Dendritic cell treated with granulocyte-macrophage colony-stimulating factor and Interleukin-4, amounts not matched to agents 40 ng/mL and 50 ng/mL, for 4 days (primary cell): ENCODE measurements at regions of chr1 and their contacts with region 1.

Region 1: DNA sequence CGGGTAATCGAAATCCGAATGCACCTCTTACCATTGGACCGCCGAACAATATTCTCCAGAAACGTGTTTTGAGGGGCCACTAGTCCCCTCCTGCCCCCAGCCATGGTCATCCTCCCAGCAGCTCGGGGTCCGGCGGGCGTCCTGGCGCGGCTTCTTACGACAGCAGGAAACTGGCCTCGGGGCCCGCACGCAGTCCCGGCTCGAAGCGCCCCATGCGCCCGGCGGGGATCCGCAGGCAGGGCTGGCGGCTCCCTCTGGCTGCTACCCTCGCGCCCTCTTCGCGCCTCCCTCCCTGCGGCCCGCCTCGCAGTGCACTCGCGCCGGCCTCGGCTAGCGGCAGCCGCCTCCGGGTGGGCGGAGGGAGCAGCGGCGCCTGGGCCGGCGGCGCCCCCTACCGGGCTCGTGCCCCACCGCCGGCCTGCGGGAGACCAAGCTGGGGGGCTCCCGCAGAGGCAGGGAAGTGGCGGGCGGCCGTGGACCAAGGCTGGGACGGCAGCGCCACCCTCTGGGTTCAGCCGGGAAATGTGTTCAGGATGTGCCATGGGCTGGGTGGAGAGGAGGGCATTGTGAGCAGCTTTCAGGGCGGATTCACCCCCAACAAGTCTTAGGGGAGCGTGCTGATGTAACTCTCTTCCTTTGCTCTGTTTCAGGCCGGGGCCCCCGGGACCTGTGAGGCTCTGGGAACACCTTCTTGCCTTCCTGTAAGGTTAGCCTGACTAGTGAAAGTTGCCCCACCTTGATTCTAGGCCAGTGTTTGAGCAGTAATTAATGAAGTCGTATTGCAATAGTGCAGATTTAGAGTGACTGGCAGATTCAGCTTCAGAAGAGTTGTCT is at the start of gene KCNH1:
- H3K4me3 Mint-ChIP-seq: peak within 1 kb of the TSS; percentile 64
- H3K27ac Mint-ChIP-seq: no peak within 1 kb of the TSS
- H3K4me1 Mint-ChIP-seq: peaks cover 10% of the 10 kb centered on the region
- H3K27me3 Mint-ChIP-seq: peaks cover 53% of the 10 kb centered on the region

Region 2: DNA sequence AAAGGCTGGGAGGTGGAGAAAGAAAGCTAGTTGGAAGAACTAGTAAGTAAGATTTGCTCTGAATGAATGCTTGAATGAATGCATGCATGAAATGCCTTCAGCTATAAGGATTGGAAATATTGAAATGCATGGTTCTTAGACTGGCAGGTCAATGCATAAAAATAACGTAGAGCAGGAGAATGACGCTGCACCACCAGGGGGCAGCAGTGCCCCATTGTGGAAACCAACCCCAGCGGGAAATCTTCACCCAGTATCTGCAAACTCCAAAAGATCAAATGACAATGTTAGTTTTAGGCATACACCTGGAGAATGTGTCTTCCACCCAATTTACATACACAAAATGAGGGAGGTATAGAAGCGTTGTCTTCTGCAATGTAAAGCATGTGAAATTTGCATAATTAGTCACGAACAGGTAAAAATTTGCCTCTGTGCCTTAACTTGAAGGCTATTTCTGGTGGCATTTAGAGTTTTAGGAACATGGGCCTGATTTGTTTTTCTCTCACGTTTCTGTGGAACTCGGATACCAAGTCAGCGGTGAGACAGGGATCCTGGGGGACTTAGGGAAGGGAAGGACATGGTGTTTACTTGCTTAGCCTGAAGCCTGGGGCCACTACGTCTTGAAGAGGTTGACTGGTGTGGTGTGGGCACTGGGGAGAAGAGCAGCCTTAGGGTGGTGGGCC is 726.7 kb before region 1 on chr1:
- intact Hi-C with region 1: loop called (anchors 1 kb)
- H3K4me3 Mint-ChIP-seq: no peak overlapping the region
- H3K27ac Mint-ChIP-seq: no peak overlapping the region
- H3K4me1 Mint-ChIP-seq: no peaks in the 10 kb centered on the region
- H3K27me3 Mint-ChIP-seq: no peaks in the 10 kb centered on the region

Region 3: DNA sequence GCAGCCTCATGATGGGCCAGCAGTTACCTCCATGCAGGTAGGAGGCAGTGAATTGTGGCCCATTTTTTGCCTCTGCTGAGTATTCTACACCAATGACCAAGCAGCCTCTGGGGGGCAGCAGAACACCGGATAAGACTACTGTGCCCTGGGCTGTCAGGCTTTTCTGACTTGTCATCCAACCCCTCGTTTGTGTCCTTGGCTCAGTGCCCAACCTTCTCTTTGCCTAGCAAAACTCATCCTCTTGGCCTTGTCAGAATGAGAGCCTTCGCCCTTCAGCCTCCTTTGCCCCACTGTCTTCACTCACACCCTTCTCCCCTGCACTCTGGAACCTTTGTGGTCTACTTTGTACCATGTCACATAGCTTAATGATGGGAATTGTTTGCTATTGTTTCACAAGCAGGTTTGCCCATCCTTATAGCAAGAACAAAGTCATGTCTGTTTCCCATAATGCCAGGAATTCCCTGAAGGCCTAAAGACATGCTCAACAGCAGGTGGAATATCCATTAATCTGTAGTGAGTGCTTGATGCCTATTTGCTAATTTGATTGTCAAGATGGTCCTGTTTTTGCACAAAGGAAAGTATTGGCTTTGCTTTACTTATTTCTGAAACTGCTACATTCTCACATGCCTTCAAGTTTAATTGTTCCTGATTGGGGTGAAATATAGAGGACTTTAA is 549.5 kb before region 1 on chr1:
- intact Hi-C with region 1: loop called (anchors 1 kb)
- H3K4me3 Mint-ChIP-seq: no peak overlapping the region
- H3K27ac Mint-ChIP-seq: no peak overlapping the region
- H3K4me1 Mint-ChIP-seq: no peaks in the 10 kb centered on the region
- H3K27me3 Mint-ChIP-seq: no peaks in the 10 kb centered on the region

Region 4: GRCh38 chr1:211258756-211259637 is 124.9 kb after region 1 on chr1 and contains the start of gene RCOR3:
- intact Hi-C with region 1: loop called (anchors 10 kb)
- H3K4me3 Mint-ChIP-seq: peak within 1 kb of the TSS; percentile 94
- H3K27ac Mint-ChIP-seq: peak within 1 kb of the TSS; percentile 99
- H3K4me1 Mint-ChIP-seq: peaks cover 26% of the 10 kb centered on the region
- H3K27me3 Mint-ChIP-seq: no peaks in the 10 kb centered on the region